Aorta (tissue), 5 donors: ENCODE measurements at regions of chr3 and their contacts with region 1.

Region 1: GRCh38 chr3:127775398-127776109 is 46.8 kb downstream of the MGLL start:
- DNase-seq: peak; percentile 71 to 86
- ATAC-seq: peak; percentile 70
- H3K4me3 ChIP-seq: no peak overlapping the region
- H3K27ac ChIP-seq: peak overlapping the region in 1 of 2 donors; percentile 62
- H3K4me1 ChIP-seq: peaks cover 0 to 3% of the 10 kb centered on the region in 2 donors
- H3K27me3 ChIP-seq: no peaks in the 10 kb centered on the region

Region 2: GRCh38 chr3:127735767-127736704 is 39.5 kb before region 1 on chr3:
- intact Hi-C with region 1: loop called in 1 of 2 experiments (anchors 5 kb)
- DNase-seq: no peak
- ATAC-seq: peak; percentile 61
- H3K4me3 ChIP-seq: no peak overlapping the region
- H3K27ac ChIP-seq: no peak overlapping the region
- H3K4me1 ChIP-seq: peaks cover 5% of the 10 kb centered on the region in 2 donors
- H3K27me3 ChIP-seq: no peaks in the 10 kb centered on the region

Region 3: DNA sequence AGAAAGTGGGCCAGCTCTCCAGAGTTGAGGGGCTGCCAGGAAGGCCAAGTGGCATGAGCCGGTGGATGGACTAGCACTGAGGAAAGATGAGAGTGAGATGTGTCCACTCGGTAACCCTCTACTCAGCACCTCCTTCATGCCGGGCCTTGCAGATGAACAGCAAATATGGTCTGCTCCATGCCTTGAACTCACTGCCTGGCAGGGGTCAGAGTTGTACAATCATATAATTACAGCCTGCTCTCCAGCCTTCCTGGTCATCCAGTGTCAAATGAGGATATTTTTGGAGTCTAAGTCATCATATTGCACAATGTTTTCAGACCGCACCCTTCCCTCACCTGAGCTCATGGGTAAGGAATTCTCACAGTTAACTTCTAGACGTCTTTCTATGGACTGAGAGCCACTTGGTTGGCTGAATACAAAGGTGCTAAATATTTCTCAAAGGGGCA is 41.9 kb after region 1 on chr3:
- intact Hi-C with region 1: loop called in 1 of 2 experiments (anchors 5 kb)
- DNase-seq: no peak
- ATAC-seq: peak; percentile 24
- H3K4me3 ChIP-seq: no peak overlapping the region
- H3K27ac ChIP-seq: no peak overlapping the region
- H3K4me1 ChIP-seq: peaks cover 0 to 2% of the 10 kb centered on the region in 2 donors
- H3K27me3 ChIP-seq: no peaks in the 10 kb centered on the region

Region 4: GRCh38 chr3:128080320-128081080 is 304.9 kb after region 1 on chr3:
- intact Hi-C with region 1: no loop called
- DNase-seq: no peak
- ATAC-seq: no peak
- H3K4me3 ChIP-seq: no peak overlapping the region
- H3K27ac ChIP-seq: no peak overlapping the region
- H3K4me1 ChIP-seq: peaks cover 0 to 3% of the 10 kb centered on the region in 2 donors
- H3K27me3 ChIP-seq: no peaks in the 10 kb centered on the region